ENCODE measurements at regions of chr4 and their contacts with region 1.

Region 1: GRCh38 chr4:13654158-13654797 is 26.8 kb upstream of the BOD1L1 start:
- DNase-seq: peak; percentile 70
- H3K4me3 Mint-ChIP-seq: peak overlapping the region; percentile 82
- H3K27ac Mint-ChIP-seq: no peak overlapping the region
- H3K4me1 Mint-ChIP-seq: peaks cover 19% of the 10 kb centered on the region
- H3K27me3 Mint-ChIP-seq: peaks cover 16% of the 10 kb centered on the region

Region 2: GRCh38 chr4:12729384-12729783 is 924.9 kb before region 1 on chr4:
- intact Hi-C with region 1: loop called (anchors 1 kb)
- DNase-seq: no peak
- H3K4me3 Mint-ChIP-seq: no peak overlapping the region
- H3K27ac Mint-ChIP-seq: no peak overlapping the region
- H3K4me1 Mint-ChIP-seq: no peaks in the 10 kb centered on the region
- H3K27me3 Mint-ChIP-seq: no peaks in the 10 kb centered on the region

Region 3: DNA sequence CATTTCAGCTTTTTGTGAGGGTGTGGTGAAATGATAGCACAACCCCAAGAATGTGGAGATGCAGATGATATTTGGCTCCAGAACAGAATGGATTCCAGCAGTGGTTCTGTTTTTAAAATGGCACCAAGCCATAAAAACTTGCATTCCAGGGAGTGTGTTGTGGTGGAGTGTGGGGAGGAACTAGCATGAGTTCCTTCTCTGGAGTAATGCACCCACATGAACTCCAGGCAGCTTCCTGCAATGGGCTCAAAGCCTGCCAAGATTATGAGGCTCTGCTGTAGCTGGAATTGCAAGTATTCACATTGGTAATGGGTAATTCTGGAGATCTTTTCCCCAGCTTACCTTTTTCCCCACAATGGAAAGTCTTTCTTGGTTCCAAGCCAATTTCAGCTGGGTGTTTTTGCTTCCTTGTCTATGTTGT is 331.6 kb before region 1 on chr4:
- intact Hi-C with region 1: no loop called
- DNase-seq: no peak
- H3K4me3 Mint-ChIP-seq: no peak overlapping the region
- H3K27ac Mint-ChIP-seq: no peak overlapping the region
- H3K4me1 Mint-ChIP-seq: no peaks in the 10 kb centered on the region
- H3K27me3 Mint-ChIP-seq: no peaks in the 10 kb centered on the region

Region 4: DNA sequence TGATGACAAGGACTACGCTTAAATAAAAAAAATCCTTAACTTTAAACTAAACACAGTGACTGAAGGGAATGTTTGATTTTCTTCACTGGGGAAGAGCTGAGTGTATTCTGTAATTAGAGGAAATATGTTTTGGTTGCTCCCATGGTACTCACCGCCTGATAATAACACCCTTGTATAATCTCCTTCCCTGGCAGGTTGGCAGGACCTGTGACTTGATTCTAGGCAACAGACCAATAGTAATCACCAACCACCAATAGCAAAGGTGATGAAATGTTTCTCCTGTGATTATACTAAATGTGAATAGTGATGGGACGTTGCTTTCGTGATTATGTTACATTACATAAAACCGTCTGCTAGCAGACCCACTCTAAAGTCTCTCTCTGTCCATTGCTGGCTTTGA is 811.2 kb after region 1 on chr4:
- intact Hi-C with region 1: loop called (anchors 10 kb)
- DNase-seq: no peak
- H3K4me3 Mint-ChIP-seq: no peak overlapping the region
- H3K27ac Mint-ChIP-seq: no peak overlapping the region
- H3K4me1 Mint-ChIP-seq: no peaks in the 10 kb centered on the region
- H3K27me3 Mint-ChIP-seq: no peaks in the 10 kb centered on the region

Region 5: DNA sequence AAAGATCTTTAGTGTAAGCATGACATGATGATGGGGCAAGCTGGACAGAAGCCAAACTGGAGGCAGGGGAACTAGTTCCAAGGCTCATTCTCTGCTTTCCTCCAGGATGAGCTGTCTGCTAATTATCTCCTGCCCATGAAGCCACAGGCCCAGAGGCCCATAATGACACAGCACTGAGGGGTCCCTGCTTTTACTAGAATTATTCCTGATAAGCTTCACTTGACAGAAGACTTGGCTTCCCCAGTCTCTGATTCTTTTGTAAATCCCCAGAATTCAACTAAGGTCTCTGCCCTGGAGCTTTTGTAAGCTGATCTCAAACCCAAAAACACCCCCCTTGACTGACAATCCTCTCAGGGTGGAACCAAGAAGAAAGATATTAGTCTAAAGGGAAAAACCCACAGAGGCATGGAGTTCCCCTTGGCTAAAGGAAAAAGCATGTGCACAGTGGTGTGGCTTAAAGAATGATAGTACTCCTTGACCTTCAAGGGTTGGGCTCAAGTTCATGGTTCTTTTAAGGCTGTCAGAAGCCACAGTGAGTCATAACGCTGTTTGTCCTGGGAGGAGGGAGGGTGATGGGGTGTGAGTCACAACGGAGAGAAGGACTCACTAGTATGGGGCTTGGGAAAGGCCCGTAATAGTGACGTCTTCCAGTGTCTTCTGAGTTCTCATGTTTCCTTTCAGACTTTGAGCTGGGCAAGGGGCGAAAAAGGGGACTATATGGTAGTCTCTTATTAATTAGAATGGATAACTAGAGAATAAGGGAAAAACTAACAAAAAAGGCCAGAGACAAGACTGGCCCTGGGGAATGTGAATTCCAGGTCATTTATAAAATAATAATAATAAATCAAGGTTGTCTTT is 1202.0 kb after region 1 on chr4:
- intact Hi-C with region 1: loop called (anchors 2 kb)
- DNase-seq: peak; percentile 61
- H3K4me3 Mint-ChIP-seq: no peak overlapping the region
- H3K27ac Mint-ChIP-seq: peak overlapping the region; percentile 80
- H3K4me1 Mint-ChIP-seq: peaks cover 52% of the 10 kb centered on the region
- H3K27me3 Mint-ChIP-seq: no peaks in the 10 kb centered on the region

Region 6: DNA sequence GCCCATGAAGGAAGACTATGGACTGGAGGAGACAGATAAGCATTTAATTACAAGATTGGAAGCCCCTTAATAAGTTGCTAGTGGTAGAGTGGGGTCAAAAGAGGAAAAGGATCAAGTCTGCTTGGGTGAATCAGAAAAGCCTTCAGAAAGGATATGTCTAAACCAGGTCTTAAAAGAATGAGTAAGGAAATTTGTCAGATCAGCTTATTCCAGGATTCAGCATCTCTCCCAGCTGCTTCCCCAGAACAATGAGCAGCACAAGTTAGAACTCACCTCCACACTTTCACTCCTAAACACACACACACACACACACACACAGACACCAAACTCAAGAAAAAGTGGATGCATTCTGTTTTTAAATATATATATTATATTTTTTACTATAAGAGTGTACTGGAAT is 1514.5 kb after region 1 on chr4:
- intact Hi-C with region 1: loop called (anchors 2 kb)
- DNase-seq: no peak
- H3K4me3 Mint-ChIP-seq: no peak overlapping the region
- H3K27ac Mint-ChIP-seq: no peak overlapping the region
- H3K4me1 Mint-ChIP-seq: no peaks in the 10 kb centered on the region
- H3K27me3 Mint-ChIP-seq: peaks cover 14% of the 10 kb centered on the region

Region 7: DNA sequence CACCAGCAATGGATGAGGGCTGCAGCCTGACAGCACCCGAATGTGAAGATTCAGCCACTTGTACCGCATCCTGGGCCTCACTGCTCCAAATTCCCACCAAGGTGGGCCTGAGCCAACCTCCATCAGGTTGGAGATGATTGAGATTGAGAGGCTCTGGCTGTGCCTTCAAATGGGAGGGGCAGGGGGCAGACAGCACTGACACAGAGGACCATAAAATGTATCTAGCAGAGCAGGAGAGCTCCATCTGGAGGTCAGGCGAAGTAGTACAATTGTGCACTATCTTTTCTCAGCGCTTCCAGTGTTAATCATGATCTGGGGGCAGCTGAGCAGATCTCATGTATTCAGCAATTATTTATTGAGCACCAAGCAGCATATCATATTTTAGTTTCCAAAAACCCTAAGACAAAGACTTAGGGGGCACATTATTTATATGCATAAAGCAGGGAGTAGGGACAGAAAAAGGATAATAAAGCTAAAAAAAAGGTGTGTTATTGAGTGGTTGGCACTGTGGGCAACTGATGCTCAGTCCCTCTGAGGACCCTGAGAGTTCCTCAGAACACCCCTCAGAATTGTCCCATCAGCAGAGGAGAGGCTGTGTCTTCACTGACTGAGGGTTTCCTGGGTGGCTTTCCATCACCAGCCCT is 1742.0 kb after region 1 on chr4:
- intact Hi-C with region 1: loop called (anchors 2 kb)
- DNase-seq: peak; percentile 32
- H3K4me3 Mint-ChIP-seq: no peak overlapping the region
- H3K27ac Mint-ChIP-seq: no peak overlapping the region
- H3K4me1 Mint-ChIP-seq: peaks cover 9% of the 10 kb centered on the region
- H3K27me3 Mint-ChIP-seq: no peaks in the 10 kb centered on the region

Measured in activated T-helper 1 cell treated with anti-CD3 and anti-CD28 coated beads, Interleukin-12 subunit alpha, Interleukin-12 subunit beta, Interleukin-2, Interleukin-4 antibody, amounts not matched to agents 30 ng/mL and 10 ng/mL and 1 ng/mL, durations not matched to agents 14 hours and 24 hours and 36 hours (primary cell).